Panc1 (cell line): ENCODE measurements at regions of chr5 and their contacts with region 1.

Region 1: GRCh38 chr5:36241631-36242533 is at the start of gene NADK2:
- DNase-seq: peak; percentile 85
- ATAC-seq: peak; percentile 92
- H3K4me3 ChIP-seq: peak within 1 kb of the TSS; percentile 79
- H3K27ac ChIP-seq: peak within 1 kb of the TSS; percentile 80
- H3K4me1 ChIP-seq: peaks cover 25% of the 10 kb centered on the region
- H3K27me3 ChIP-seq: no peaks in the 10 kb centered on the region
- CTCF ChIP-seq: peak; percentile 80
- total RNA-seq, gene NADK2: 22.5 TPM

Region 2: GRCh38 chr5:36033486-36033885 is 208.4 kb before region 1 on chr5:
- CTCF ChIA-PET with region 1: no interaction called
- POLR2A ChIA-PET with region 1: no interaction called
- in situ Hi-C with region 1: no loop called
- intact Hi-C with region 1: no loop called
- DNase-seq: no peak
- ATAC-seq: no peak
- H3K4me3 ChIP-seq: no peak overlapping the region
- H3K27ac ChIP-seq: no peak overlapping the region
- H3K4me1 ChIP-seq: no peaks in the 10 kb centered on the region
- H3K27me3 ChIP-seq: no peaks in the 10 kb centered on the region
- CTCF ChIP-seq: no peak

Region 3: GRCh38 chr5:36285837-36286615 is 44.1 kb after region 1 on chr5:
- CTCF ChIA-PET with region 1: no interaction called
- POLR2A ChIA-PET with region 1: no interaction called
- in situ Hi-C with region 1: no loop called
- intact Hi-C with region 1: no loop called
- DNase-seq: no peak
- ATAC-seq: no peak
- H3K4me3 ChIP-seq: no peak overlapping the region
- H3K27ac ChIP-seq: no peak overlapping the region
- H3K4me1 ChIP-seq: no peaks in the 10 kb centered on the region
- H3K27me3 ChIP-seq: peaks cover 4% of the 10 kb centered on the region; the same call in 1 of the 2 replicates
- CTCF ChIP-seq: no peak

Region 4: GRCh38 chr5:36312953-36313352 is 71.1 kb after region 1 on chr5:
- CTCF ChIA-PET with region 1: interaction called, 11 read pairs
- POLR2A ChIA-PET with region 1: no interaction called
- in situ Hi-C with region 1: no loop called
- intact Hi-C with region 1: no loop called
- DNase-seq: no peak
- ATAC-seq: no peak
- H3K4me3 ChIP-seq: no peak overlapping the region
- H3K27ac ChIP-seq: no peak overlapping the region
- H3K4me1 ChIP-seq: no peaks in the 10 kb centered on the region
- H3K27me3 ChIP-seq: peaks cover 5% of the 10 kb centered on the region
- CTCF ChIP-seq: no peak